Caco-2 (cell line): ENCODE measurements at regions of chr10 and their contacts with region 1.

Region 1: GRCh38 chr10:47296156-47296894 is 3.7 kb upstream of the GDF10 start:
- DNase-seq: no peak
- H3K4me3 ChIP-seq: no peak overlapping the region
- H3K4me3 Mint-ChIP-seq: no peak overlapping the region
- H3K27ac Mint-ChIP-seq: no peak overlapping the region
- H3K4me1 ChIP-seq: peaks cover 12% of the 10 kb centered on the region; the same call in 1 of the 2 replicates
- H3K4me1 Mint-ChIP-seq: peaks cover 6% of the 10 kb centered on the region
- H3K27me3 ChIP-seq: peaks cover 2% of the 10 kb centered on the region
- H3K27me3 Mint-ChIP-seq: peaks cover 51% of the 10 kb centered on the region
- CTCF ChIP-seq: no peak

Region 2: DNA sequence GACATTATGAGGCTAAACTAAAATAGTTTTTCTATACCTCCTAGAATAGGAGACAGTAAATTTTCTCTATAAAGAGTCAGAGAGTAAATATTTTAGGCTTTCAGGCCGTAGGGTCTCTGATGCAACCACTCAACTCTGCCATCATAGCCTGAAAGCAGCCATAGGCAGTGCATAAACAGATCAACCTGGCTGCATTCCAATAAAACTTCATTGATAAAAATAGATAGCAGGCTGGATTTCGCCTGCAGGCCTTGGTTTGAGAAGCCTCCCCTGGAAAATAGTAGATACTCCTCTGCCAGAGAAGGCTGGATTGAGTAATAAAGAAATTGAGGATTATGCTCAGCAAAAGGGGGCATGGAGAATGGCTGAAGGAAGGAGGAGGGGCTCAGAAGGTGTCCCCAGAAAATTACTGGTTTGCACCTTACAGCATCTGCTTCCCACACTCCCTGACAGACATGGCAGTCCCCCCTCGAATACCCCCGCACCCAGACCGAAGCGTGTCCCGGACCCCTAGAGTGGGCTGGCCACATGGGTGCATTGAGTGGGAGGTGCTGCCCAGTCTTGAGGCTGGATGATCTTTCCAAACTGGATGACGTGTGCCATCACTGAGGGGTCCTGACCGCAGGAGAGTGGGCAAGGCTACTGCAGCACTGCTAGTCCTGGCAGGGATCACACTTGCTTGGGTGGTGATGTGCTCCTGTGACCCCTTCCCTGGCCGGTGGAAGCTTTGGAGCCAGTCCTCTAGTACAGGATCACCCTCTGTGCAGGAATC is 258.5 kb before region 1 on chr10:
- CTCF ChIA-PET with region 1: no interaction called
- POLR2A ChIA-PET with region 1: interaction called, 11 read pairs
- intact Hi-C with region 1: no loop called
- DNase-seq: peak in 1 of 2 experiments; percentile 27
- H3K4me3 ChIP-seq: no peak overlapping the region
- H3K4me3 Mint-ChIP-seq: no peak overlapping the region
- H3K27ac Mint-ChIP-seq: no peak overlapping the region
- H3K4me1 ChIP-seq: peaks cover 15% of the 10 kb centered on the region
- H3K4me1 Mint-ChIP-seq: no peaks in the 10 kb centered on the region
- H3K27me3 ChIP-seq: no peaks in the 10 kb centered on the region
- H3K27me3 Mint-ChIP-seq: peaks cover 21% of the 10 kb centered on the region
- CTCF ChIP-seq: no peak